Calu3 (cell line): ENCODE measurements at regions of chr14 and their contacts with region 1.

Region 1: DNA sequence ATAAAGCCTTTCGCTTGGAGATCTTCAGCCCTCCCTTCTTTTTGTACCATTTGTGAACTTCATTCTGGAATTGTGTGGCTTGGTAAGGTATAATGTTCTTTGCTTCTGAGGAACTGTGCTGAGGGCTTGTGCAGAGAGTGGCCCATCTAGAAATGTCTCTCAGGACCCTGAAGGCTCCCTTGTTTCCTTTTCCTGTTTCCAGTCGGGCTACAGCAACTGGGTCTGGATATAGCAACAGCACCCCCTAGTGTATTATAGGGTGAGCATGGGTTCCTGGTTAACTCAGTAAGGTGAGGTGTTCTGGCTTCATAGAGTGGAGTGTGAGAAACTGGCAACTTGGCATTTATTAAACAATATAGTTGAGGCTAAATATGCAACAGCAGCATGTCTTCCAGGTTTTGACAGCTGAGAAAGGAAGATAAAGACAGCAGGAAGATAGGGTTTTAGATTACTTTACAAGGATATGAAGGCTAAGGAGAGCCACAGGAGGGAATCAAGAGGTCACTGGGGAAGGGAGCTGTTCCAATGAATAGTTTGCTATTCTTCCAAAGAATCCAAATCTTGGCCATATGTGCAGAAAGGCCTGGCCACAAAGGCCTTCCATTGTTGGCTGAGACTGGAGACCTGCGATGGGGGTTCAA is 49.1 kb upstream of the RNU6-8 start:
- DNase-seq: peak; percentile 65
- H3K4me3 Mint-ChIP-seq: no peak overlapping the region
- H3K27ac Mint-ChIP-seq: no peak overlapping the region
- H3K4me1 Mint-ChIP-seq: no peaks in the 10 kb centered on the region
- H3K27me3 Mint-ChIP-seq: no peaks in the 10 kb centered on the region
- CTCF ChIP-seq: peak; percentile 58

Region 2: GRCh38 chr14:31456841-31457664 is 795.1 kb before region 1 on chr14 and contains the start of gene DTD2:
- CTCF ChIA-PET with region 1: no interaction called
- intact Hi-C with region 1: loop called (anchors 1 kb)
- DNase-seq: peak; percentile 92
- H3K4me3 Mint-ChIP-seq: peak within 1 kb of the TSS; percentile 92
- H3K27ac Mint-ChIP-seq: peak within 1 kb of the TSS; percentile 88
- H3K4me1 Mint-ChIP-seq: no peaks in the 10 kb centered on the region
- H3K27me3 Mint-ChIP-seq: no peaks in the 10 kb centered on the region
- CTCF ChIP-seq: no peak
- total RNA-seq, gene DTD2: 12.2 and 13.9 TPM in 2 replicates

Region 3: DNA sequence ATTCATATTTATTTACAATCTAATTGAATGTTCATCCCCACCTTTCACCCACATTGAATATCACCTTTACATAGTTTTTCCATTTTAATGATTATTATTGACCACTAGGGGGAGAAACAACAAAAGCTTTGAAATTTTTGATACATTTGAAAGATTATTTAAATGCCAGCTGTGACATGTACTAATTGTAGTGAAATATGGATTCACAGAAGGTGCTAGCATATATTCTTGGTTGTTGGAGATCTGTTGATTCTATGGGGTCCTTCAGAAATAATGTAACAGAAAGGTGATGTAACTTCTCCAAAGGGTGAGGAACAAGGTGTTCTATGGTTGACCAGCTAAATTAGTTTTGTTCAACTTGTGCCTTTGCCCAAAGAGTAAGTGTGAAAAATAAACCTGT is 741.9 kb before region 1 on chr14:
- CTCF ChIA-PET with region 1: interaction called, 10 read pairs
- intact Hi-C with region 1: loop called (anchors 2 kb)
- DNase-seq: no peak
- H3K4me3 Mint-ChIP-seq: no peak overlapping the region
- H3K27ac Mint-ChIP-seq: no peak overlapping the region
- H3K4me1 Mint-ChIP-seq: no peaks in the 10 kb centered on the region
- H3K27me3 Mint-ChIP-seq: no peaks in the 10 kb centered on the region
- CTCF ChIP-seq: no peak

Region 4: DNA sequence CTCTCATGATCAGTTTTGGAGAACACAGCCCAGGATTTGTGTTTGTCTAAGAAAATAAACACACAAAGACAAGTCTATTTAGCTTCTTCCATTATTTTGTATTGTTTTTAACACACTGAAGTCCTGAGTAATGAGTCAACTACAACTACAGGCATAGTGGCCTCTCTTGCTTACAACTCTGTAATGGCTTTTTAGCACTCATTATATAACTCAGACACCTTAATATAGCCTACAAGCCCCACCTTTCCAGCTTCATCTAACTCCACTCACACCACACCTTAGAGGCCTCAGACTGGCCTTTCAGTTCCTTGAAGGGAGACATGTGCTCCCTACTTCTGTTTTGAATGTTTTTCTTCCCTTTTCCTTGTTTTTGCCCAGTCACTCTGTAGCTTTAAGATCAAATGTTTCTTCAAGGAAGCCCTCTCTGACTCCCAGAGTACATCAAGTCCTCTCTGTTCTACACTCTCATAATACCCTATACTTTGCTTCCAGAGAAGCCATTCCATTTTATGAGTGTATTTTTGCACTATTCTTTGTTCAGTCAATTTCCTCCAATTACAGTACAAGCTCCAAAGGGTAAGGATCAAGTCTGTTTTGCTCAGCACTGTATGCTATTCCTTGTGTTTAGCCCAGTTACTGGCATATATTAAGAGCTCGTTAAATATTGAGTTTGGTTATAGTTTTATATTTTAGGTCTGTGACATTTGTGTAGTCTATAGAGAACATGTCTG is 408.6 kb before region 1 on chr14:
- CTCF ChIA-PET with region 1: no interaction called
- intact Hi-C with region 1: no loop called
- DNase-seq: no peak
- H3K4me3 Mint-ChIP-seq: no peak overlapping the region
- H3K27ac Mint-ChIP-seq: peak overlapping the region; percentile 2
- H3K4me1 Mint-ChIP-seq: peaks cover 8% of the 10 kb centered on the region
- H3K27me3 Mint-ChIP-seq: no peaks in the 10 kb centered on the region
- CTCF ChIP-seq: no peak

Region 5: DNA sequence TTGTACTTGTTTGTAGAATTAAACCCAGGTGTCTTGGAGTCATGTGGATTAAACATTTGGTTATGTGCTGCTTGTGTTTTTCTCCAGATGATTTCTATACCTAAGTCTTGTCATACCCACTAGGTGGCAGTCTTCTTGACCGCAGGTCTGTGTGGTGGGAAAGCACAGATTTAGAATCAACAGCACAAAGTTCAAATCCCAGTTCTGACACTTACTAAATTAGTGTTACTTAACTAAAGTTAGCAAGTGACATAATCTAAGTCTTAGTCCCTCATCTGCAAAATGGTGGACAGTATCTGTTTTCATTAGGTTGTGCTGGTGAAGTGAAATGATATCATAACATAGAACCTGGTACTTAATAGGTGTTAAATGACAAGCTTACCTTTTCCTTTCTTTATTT is 326.0 kb before region 1 on chr14:
- CTCF ChIA-PET with region 1: interaction called, 4 read pairs
- intact Hi-C with region 1: loop called (anchors 2 kb)
- DNase-seq: no peak
- H3K4me3 Mint-ChIP-seq: no peak overlapping the region
- H3K27ac Mint-ChIP-seq: no peak overlapping the region
- H3K4me1 Mint-ChIP-seq: peaks cover 15% of the 10 kb centered on the region
- H3K27me3 Mint-ChIP-seq: no peaks in the 10 kb centered on the region
- CTCF ChIP-seq: peak; percentile 25

Region 6: DNA sequence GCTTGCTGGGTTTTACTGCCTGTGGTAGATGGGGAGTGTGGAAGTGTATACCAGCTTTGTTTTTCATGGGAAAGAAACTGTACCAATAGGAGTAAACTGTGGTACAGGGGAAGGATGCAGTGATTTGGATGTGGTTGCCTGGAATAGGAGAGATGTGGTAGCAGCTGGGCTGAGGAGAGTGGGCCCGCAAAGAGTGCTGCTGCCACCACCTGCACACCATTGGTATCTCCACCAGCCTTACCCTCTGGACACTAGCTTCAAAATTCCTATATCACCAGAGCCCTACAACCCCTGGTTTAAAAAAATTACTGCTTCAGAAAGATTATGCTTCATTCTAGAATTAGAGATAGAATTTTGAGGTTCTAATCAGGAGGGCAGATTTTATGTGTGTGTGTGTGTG is 130.6 kb after region 1 on chr14:
- CTCF ChIA-PET with region 1: interaction called, 10 read pairs
- intact Hi-C with region 1: no loop called
- DNase-seq: peak; percentile 61
- H3K4me3 Mint-ChIP-seq: no peak overlapping the region
- H3K27ac Mint-ChIP-seq: no peak overlapping the region
- H3K4me1 Mint-ChIP-seq: peaks cover 45% of the 10 kb centered on the region
- H3K27me3 Mint-ChIP-seq: no peaks in the 10 kb centered on the region
- CTCF ChIP-seq: peak; percentile 46